Left lung (tissue), 14 donors: ENCODE measurements at regions of chr3 and their contacts with region 1.

Region 1: GRCh38 chr3:195522254-195523023 is 20.7 kb downstream of the PPP1R2 start:
- DNase-seq: peak in 1 of 4 donors; percentile 28
- ATAC-seq: peak; percentile 54
- H3K4me3 ChIP-seq: no peak overlapping the region
- H3K27ac ChIP-seq: no peak overlapping the region
- H3K4me1 ChIP-seq: no peaks in the 10 kb centered on the region
- H3K27me3 ChIP-seq: no peaks in the 10 kb centered on the region
- CTCF ChIP-seq: peak; percentile 75 to 77

Region 2: DNA sequence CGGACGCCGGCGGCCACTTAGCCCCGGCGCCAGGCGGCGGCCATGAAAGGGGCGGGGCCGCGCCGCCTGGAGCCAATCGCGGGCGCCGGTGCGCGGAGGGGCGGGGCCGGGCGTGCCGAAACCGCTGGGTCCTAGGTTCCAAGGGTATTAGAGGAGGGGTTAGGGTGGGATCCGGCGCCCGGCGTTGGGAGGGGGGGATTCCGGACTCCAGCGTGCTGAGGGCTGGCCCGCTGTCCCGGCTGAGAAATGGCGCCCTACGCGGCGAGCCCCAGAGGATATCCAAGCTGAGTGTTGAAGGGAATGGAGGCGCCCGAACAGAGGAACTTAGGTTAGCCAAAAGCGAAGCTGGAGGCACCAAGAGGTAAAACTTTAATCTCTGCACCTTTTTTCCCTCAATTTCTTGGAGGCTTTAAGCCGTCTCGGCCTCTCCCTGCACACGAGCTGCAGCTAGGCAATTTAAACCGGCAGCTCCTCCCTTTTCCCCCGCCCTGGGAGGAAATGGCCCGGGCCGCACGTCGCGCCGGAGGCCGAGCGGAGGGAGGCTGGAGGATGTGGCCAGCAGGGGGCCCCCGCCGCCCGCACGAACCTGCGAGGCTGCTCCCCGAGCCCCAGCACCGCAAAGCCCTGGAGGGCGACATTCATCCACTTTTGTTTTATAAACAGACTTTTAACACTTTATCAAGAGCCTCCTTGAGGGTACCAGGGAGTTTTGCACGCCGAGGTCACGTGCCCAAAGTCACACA is 251.2 kb before region 1 on chr3 and contains the start of gene XXYLT1:
- intact Hi-C with region 1: loop called in 1 of 2 experiments (anchors 10 kb)
- DNase-seq: peak; percentile 91 to 98 (median 92)
- ATAC-seq: peak; percentile 96
- H3K4me3 ChIP-seq: peak within 1 kb of the TSS; percentile 82 to 88
- H3K27ac ChIP-seq: peak within 1 kb of the TSS; percentile 86 to 90
- H3K4me1 ChIP-seq: peaks cover 13 to 26% of the 10 kb centered on the region in 2 donors
- H3K27me3 ChIP-seq: no peaks in the 10 kb centered on the region
- CTCF ChIP-seq: peak; percentile 98
- polyA plus RNA-seq, gene XXYLT1: 24.7 to 31.1 (median 26.3) TPM

Region 3: DNA sequence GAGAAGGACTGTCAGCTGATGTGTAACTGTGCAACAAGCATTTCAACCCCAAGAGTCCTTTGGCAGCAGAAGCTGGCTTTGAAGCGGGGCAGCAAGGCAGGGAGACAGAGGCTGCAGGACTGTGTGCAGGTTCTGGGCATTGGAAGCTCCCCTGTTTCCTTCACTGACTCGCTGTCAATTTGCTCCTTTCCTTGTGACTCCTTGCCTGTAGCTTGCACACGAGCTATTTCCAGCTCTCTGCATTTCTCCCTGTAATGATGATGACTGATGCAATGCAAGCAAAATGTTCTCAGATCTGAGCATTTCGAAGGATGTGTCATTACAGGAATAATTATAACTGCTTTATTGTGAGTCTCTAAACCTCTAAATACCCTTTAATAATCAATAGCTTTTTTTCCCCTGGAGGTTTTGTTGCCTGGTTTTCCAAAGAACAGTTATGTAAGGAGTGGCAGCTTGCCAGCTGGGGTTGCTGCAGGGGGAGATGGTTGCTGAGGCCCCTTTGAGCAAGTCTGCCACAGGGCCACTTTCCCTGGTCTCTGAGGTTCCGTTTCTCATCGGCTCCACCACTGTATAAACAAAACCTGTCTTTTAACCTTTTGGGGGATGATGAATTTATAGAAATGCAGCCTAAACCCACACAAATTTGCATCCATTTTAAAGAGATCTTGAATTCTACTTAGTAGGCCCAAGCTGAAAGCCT is 58.5 kb after region 1 on chr3:
- intact Hi-C with region 1: no loop called
- DNase-seq: no peak
- ATAC-seq: no peak
- H3K4me3 ChIP-seq: no peak overlapping the region
- H3K27ac ChIP-seq: no peak overlapping the region
- H3K4me1 ChIP-seq: no peaks in the 10 kb centered on the region
- H3K27me3 ChIP-seq: peaks cover 0 to 8% of the 10 kb centered on the region in 2 donors
- CTCF ChIP-seq: no peak

Region 4: GRCh38 chr3:195829897-195830254 is 307.4 kb after region 1 on chr3:
- intact Hi-C with region 1: no loop called
- DNase-seq: peak in 1 of 4 donors; percentile 72
- ATAC-seq: peak; percentile 80
- H3K4me3 ChIP-seq: no peak overlapping the region
- H3K27ac ChIP-seq: no peak overlapping the region
- H3K4me1 ChIP-seq: no peaks in the 10 kb centered on the region
- H3K27me3 ChIP-seq: peaks cover 0 to 9% of the 10 kb centered on the region in 2 donors
- CTCF ChIP-seq: no peak